ENCODE measurements at regions of chr11 and their contacts with region 1.

Region 1: GRCh38 chr11:129750349-129751292 is 65.0 kb upstream of the TMEM45B start:
- DNase-seq: peak; percentile 63 to 84 (median 74)
- ATAC-seq: peak; percentile 99
- H3K4me3 ChIP-seq: no peak overlapping the region
- H3K27ac ChIP-seq: no peak overlapping the region
- H3K4me1 ChIP-seq: peaks cover 0 to 6% of the 10 kb centered on the region in 2 experiments; a peak in 2 of 5 replicates
- H3K27me3 ChIP-seq: peaks cover 6 to 8% of the 10 kb centered on the region in 2 experiments; a peak in 3 of 5 replicates
- CTCF ChIP-seq: peak; percentile 97 to 100 (median 99)
- EP300 ChIP-seq: no peak
- POLR2A ChIP-seq: no peak
- RAD21 ChIP-seq: peak; percentile 94 to 97

Region 2: DNA sequence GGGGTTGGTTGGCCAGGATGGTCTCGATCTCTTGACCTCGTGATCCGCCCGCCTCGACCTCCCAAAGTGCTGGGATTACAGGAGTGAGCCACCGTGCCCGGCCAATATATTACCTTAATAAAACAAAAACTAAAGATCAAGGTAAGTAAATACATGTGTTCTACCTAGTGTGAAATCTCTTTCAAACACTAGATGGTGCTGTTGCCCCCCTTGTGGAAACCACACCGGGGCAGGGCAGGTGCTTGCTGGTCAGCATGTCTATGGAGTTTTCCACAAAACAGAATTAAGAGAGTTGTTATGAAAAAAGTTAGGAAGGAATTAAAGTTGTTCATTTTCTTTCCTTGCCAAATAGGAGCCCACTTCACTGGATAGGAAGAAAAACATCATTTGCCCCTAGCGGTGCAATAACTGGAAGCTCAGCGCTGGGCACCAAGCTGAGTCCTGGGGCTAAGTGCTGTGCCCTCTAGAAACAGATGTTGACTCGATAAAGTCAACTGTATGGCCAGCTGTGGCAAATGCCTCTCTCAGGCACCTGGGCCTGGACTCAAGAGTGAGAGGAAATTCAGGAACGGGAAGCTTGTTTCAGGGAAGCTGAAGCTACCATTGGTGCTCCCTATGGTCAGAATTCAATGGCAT is 865.8 kb before region 1 on chr11:
- CTCF ChIA-PET with region 1: interaction called, 3 read pairs
- POLR2A ChIA-PET with region 1: no interaction called
- in situ Hi-C with region 1: no loop called
- intact Hi-C with region 1: loop called (anchors 2 kb)
- DNase-seq: peak; percentile 61 to 70 (median 67)
- ATAC-seq: peak; percentile 96
- H3K4me3 ChIP-seq: no peak overlapping the region
- H3K27ac ChIP-seq: no peak overlapping the region
- H3K4me1 ChIP-seq: no peaks in the 10 kb centered on the region
- H3K27me3 ChIP-seq: peaks cover 0 to 11% of the 10 kb centered on the region in 2 experiments; a peak in 2 of 5 replicates
- CTCF ChIP-seq: peak; percentile 71 to 81 (median 81)
- EP300 ChIP-seq: no peak
- POLR2A ChIP-seq: no peak
- RAD21 ChIP-seq: peak; percentile 85 to 87

Region 3: DNA sequence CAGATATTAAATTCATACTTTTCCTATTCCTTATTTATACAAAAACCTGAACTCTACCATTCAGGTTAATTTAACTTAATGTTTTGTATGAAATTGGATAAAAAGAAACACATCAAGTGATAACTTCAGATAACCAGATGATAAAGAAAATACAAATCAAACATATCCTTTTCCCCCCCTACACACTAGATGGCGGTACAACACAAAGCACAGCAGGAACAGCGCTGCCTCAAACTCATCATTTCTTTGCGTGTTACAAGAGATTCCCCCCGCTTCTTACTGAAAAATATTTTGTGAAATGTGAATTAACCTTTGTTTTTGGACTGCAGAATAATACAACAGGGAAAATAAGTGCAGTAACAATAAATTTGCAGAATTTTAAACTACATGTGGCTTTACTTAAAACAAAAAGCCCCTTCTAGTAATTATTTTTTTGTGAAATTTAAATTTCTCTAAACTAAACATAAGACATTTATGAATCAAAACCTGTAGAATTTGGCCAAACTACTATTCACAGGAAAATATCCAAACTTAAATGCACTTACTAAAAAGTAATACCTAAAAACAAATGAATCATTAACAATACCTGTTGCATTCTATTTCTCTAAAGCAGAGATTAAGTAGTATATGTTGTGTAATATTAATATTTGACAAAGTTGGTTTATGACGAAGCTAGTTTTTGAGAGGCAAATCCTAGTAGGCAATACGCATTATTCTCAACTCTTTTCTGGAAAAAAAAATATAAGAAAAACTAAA is 632.8 kb before region 1 on chr11:
- CTCF ChIA-PET with region 1: interaction called, 11 read pairs
- POLR2A ChIA-PET with region 1: no interaction called
- in situ Hi-C with region 1: no loop called
- intact Hi-C with region 1: loop called (anchors 1 kb)
- DNase-seq: peak; percentile 13 to 54 (median 24)
- ATAC-seq: no peak
- H3K4me3 ChIP-seq: no peak overlapping the region
- H3K27ac ChIP-seq: no peak overlapping the region
- H3K4me1 ChIP-seq: no peaks in the 10 kb centered on the region
- H3K27me3 ChIP-seq: no peaks in the 10 kb centered on the region
- CTCF ChIP-seq: peak; percentile 62 to 66 (median 63)
- EP300 ChIP-seq: no peak
- POLR2A ChIP-seq: no peak
- RAD21 ChIP-seq: peak; percentile 73 to 75

Region 4: DNA sequence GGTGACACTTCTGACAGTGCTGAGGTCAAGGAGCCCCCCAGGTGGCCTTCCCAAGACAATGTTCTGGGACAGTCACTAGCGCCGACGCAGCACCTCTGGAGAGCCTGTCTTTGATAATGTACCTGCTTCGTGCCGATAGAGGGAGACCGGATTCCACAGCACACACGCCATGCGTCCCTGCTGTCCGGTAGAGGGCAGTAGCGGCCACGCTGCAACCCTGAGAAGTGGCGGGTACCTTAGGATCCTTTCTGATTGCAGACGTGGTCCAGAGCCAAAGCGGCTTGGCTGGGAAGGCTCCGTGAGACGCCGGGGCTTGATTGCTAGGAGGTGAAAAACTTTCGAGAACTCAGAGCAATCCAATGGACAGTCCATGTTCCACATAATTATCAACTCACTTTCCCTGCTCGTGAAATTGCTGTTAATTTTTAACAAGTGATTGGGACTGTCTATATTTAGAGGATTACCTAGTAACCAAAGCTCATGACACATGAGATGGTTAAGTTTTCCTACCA is 386.4 kb before region 1 on chr11:
- CTCF ChIA-PET with region 1: interaction called, 58 read pairs
- POLR2A ChIA-PET with region 1: no interaction called
- in situ Hi-C with region 1: no loop called
- intact Hi-C with region 1: loop called (anchors 1 kb)
- DNase-seq: peak; percentile 65 to 86 (median 70)
- ATAC-seq: peak; percentile 100
- H3K4me3 ChIP-seq: no peak overlapping the region
- H3K27ac ChIP-seq: no peak overlapping the region
- H3K4me1 ChIP-seq: no peaks in the 10 kb centered on the region
- H3K27me3 ChIP-seq: no peaks in the 10 kb centered on the region
- CTCF ChIP-seq: peak; percentile 99 to 100 (median 100)
- EP300 ChIP-seq: no peak
- POLR2A ChIP-seq: no peak
- RAD21 ChIP-seq: peak; percentile 84 to 89

Region 5: GRCh38 chr11:129375751-129376657 is 374.6 kb before region 1 on chr11 and contains the start of gene BARX2:
- CTCF ChIA-PET with region 1: interaction called, 3 read pairs
- POLR2A ChIA-PET with region 1: no interaction called
- in situ Hi-C with region 1: loop called (anchors 5 kb)
- intact Hi-C with region 1: no loop called
- DNase-seq: peak in 1 of 4 experiments; percentile 7
- ATAC-seq: peak; percentile 65
- H3K4me3 ChIP-seq: no peak within 1 kb of the TSS
- H3K27ac ChIP-seq: no peak within 1 kb of the TSS
- H3K4me1 ChIP-seq: no peaks in the 10 kb centered on the region
- H3K27me3 ChIP-seq: peaks cover 11 to 53% of the 10 kb centered on the region in 2 experiments; a peak in 4 of 5 replicates
- CTCF ChIP-seq: peak in 2 of 3 experiments; percentile 26 to 38; a peak in 3 of 6 replicates
- EP300 ChIP-seq: no peak
- POLR2A ChIP-seq: no peak
- RAD21 ChIP-seq: no peak
- polyA plus RNA-seq, gene BARX2: not detected

Region 6: GRCh38 chr11:129695575-129696308 is 54.9 kb before region 1 on chr11:
- CTCF ChIA-PET with region 1: interaction called, 7 read pairs
- POLR2A ChIA-PET with region 1: no interaction called
- in situ Hi-C with region 1: no loop called
- intact Hi-C with region 1: loop called (anchors 2 kb)
- DNase-seq: peak; percentile 67 to 72 (median 70)
- ATAC-seq: peak; percentile 96
- H3K4me3 ChIP-seq: no peak overlapping the region
- H3K27ac ChIP-seq: no peak overlapping the region
- H3K4me1 ChIP-seq: peaks cover 0 to 9% of the 10 kb centered on the region in 2 experiments; a peak in 3 of 5 replicates
- H3K27me3 ChIP-seq: peaks cover 0 to 18% of the 10 kb centered on the region in 2 experiments; a peak in 2 of 5 replicates
- CTCF ChIP-seq: peak; percentile 71 to 83 (median 81)
- EP300 ChIP-seq: no peak
- POLR2A ChIP-seq: no peak
- RAD21 ChIP-seq: peak; percentile 45 to 70

Region 7: GRCh38 chr11:129709801-129710398 is 40.7 kb before region 1 on chr11:
- CTCF ChIA-PET with region 1: no interaction called
- POLR2A ChIA-PET with region 1: no interaction called
- in situ Hi-C with region 1: no loop called
- intact Hi-C with region 1: no loop called
- DNase-seq: no peak
- ATAC-seq: no peak
- H3K4me3 ChIP-seq: no peak overlapping the region
- H3K27ac ChIP-seq: no peak overlapping the region
- H3K4me1 ChIP-seq: no peaks in the 10 kb centered on the region
- H3K27me3 ChIP-seq: peaks cover 0 to 25% of the 10 kb centered on the region in 2 experiments; a peak in 2 of 5 replicates
- CTCF ChIP-seq: no peak
- EP300 ChIP-seq: no peak
- POLR2A ChIP-seq: no peak
- RAD21 ChIP-seq: no peak